ENCODE measurements at regions of chr5 and their contacts with region 1.

Region 1: GRCh38 chr5:172688349-172689217 is 47.5 kb downstream of the NEURL1B start:
- DNase-seq: peak in 2 of 3 donors; percentile 85 to 94
- H3K4me3 ChIP-seq: peak overlapping the region in 1 of 7 experiments; percentile 12
- H3K27ac ChIP-seq: peak overlapping the region; percentile 25 to 73
- H3K4me1 ChIP-seq: peaks cover 11 to 51% (median 43%) of the 10 kb centered on the region in 4 experiments
- H3K27me3 ChIP-seq: no peaks in the 10 kb centered on the region

Region 2: DNA sequence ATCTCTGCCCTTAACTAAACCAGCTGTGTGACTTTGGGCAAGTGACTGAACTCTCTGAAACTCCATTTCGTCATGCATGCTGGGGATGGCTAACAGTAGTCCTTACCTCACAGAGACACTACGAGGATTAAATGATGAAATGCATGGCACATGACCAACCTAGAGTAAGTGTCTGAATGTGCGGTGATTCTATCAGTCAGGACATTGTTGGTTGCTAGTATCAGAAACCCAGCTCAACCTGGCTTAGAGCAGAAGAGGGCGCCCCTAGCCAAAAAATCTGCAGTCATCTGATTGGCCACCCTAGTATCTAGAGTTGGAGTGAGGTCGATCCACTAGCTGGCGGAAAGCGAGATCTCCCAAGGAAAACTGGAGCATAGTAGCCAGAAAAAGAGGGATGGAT is 22.3 kb before region 1 on chr5:
- CTCF ChIA-PET with region 1: interaction called, 20 read pairs
- POLR2A ChIA-PET with region 1: no interaction called
- DNase-seq: no peak
- H3K4me3 ChIP-seq: no peak overlapping the region
- H3K27ac ChIP-seq: no peak overlapping the region
- H3K4me1 ChIP-seq: peaks cover 0 to 23% (median 6%) of the 10 kb centered on the region in 4 experiments
- H3K27me3 ChIP-seq: peaks cover 0 to 3% (median 0%) of the 10 kb centered on the region in 5 experiments

Region 3: DNA sequence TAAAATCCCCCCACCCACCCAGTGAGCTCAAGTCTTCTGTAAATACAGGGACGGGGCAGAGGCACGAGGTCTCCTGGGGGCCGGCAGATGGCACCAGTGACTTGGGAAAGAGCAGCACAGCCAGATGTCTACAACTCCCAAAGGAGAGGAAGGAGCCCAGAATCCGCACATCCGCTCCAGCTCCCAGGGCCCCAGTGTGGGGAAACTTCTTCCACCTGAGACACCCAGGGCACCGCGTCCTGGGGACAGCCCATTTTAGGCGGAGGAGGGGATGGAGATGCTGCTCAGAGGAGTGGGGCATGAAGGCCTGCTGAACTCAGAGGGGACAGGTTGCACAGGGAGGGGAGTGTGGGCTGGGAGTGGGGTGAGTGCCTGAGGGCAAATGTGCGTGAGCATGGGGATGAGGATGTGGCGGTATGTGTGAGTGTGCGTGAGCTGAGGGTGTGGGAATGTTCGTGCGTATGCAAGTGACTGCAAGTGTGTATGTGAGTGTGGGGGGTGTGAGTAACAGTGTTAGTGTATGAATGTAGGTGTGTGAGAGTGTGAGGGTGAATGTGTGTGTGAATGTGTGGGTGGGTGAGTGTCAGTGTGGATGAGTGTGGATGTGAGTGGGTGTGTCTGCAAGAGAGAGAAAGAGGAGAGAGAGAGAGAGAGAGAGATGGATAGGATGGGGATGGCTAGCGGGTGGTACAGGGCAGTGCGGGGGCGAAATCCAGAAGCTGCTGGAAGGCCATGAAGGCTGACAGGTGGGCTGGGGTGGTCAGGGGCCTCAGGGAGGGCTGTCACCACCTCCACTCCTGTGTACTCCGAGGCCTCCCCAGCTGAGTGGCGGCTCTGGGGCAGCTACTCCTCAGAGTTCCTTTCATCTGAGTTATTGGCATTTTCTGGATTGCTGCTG is 19.0 kb after region 1 on chr5:
- CTCF ChIA-PET with region 1: no interaction called
- POLR2A ChIA-PET with region 1: no interaction called
- DNase-seq: peak in 2 of 3 donors; percentile 45 to 47
- H3K4me3 ChIP-seq: no peak overlapping the region
- H3K27ac ChIP-seq: no peak overlapping the region
- H3K4me1 ChIP-seq: peaks cover 0 to 5% (median 2%) of the 10 kb centered on the region in 4 experiments
- H3K27me3 ChIP-seq: no peaks in the 10 kb centered on the region

Region 4: GRCh38 chr5:172886974-172887501 is 198.5 kb after region 1 on chr5:
- CTCF ChIA-PET with region 1: no interaction called
- POLR2A ChIA-PET with region 1: no interaction called
- DNase-seq: peak in 2 of 3 donors; percentile 34 to 42
- H3K4me3 ChIP-seq: no peak overlapping the region
- H3K27ac ChIP-seq: peak overlapping the region in 1 of 2 experiments; percentile 29
- H3K4me1 ChIP-seq: peaks cover 2 to 10% (median 4%) of the 10 kb centered on the region in 4 experiments
- H3K27me3 ChIP-seq: no peaks in the 10 kb centered on the region